ENCODE measurements at regions of chr9 and their contacts with region 1.

Region 1: GRCh38 chr9:2109069-2109650 is 94.0 kb downstream of the SMARCA2 start:
- DNase-seq: no peak
- H3K4me3 ChIP-seq: no peak overlapping the region
- H3K27ac ChIP-seq: no peak overlapping the region
- H3K4me1 ChIP-seq: no peaks in the 10 kb centered on the region
- H3K27me3 ChIP-seq: no peaks in the 10 kb centered on the region
- CTCF ChIP-seq: no peak

Region 2: GRCh38 chr9:2904242-2904930 is 795.2 kb after region 1 on chr9:
- CTCF ChIA-PET with region 1: no interaction called
- dilution Hi-C with region 1: no loop called
- in situ Hi-C with region 1: no loop called
- intact Hi-C with region 1: loop called (anchors 5 kb)
- DNase-seq: no peak
- H3K4me3 ChIP-seq: no peak overlapping the region
- H3K27ac ChIP-seq: no peak overlapping the region
- H3K4me1 ChIP-seq: no peaks in the 10 kb centered on the region
- H3K27me3 ChIP-seq: no peaks in the 10 kb centered on the region
- CTCF ChIP-seq: no peak

Measured in mammary epithelial cell (primary cell).